ENCODE measurements at regions of chr13 and their contacts with region 1.

Region 1: DNA sequence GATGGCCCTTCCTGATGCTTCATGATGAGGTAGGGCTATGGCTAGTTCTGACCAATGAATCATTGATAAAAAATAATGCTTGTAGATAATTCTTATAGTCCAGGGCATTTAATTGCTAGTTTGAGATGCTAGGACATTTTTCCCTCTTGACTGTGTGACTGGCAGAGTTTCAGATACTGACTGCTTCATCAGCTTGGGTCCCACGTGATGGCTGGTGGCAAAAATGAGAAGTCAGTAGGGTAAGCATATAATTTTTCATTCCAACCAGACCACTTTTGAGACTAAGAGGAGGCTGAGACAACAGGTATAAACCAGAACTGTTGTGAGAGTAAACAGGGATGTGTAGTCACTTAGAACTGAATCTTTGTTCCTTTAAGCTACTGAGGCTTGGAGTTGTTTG is 183.3 kb downstream of the HS6ST3 start:
- DNase-seq: no peak
- ATAC-seq: no peak
- H3K4me3 ChIP-seq: no peak overlapping the region
- H3K27ac ChIP-seq: no peak overlapping the region
- H3K4me1 ChIP-seq: no peaks in the 10 kb centered on the region
- H3K27me3 ChIP-seq: no peaks in the 10 kb centered on the region
- CTCF ChIP-seq: no peak
- EP300 ChIP-seq: no peak
- POLR2A ChIP-seq: no peak
- RAD21 ChIP-seq: no peak

Region 2: DNA sequence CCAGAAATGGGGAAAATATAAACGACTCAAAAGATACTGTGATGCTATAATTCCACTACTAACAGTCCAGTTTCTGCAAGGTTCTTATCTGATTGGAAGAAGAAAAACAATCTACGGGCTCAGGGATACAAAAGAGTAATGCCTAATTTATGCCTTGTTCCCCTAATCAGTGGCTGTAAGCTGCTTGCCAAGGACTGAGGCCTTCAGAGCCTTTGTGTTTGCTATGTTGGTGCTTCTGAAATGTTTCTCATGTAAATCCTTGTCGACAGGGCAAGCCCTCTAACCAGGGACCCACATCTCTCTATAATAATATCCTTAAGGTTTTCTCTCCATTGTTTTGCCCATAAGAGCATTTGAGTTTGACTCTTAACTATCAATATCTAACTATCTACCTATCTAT is 810.4 kb before region 1 on chr13:
- CTCF ChIA-PET with region 1: no interaction called
- POLR2A ChIA-PET with region 1: interaction called, 11 read pairs
- RAD21 ChIA-PET with region 1: no interaction called
- SMC1A ChIA-PET with region 1: no interaction called
- in situ Hi-C with region 1: no loop called
- intact Hi-C with region 1: no loop called
- DNase-seq: no peak
- ATAC-seq: no peak
- H3K4me3 ChIP-seq: no peak overlapping the region
- H3K27ac ChIP-seq: no peak overlapping the region
- H3K4me1 ChIP-seq: peaks cover 2% of the 10 kb centered on the region; the same call in 1 of the 2 replicates
- H3K27me3 ChIP-seq: no peaks in the 10 kb centered on the region
- CTCF ChIP-seq: no peak
- EP300 ChIP-seq: no peak
- POLR2A ChIP-seq: no peak
- RAD21 ChIP-seq: no peak